ENCODE measurements at regions of chr1 and their contacts with region 1.

Region 1: GRCh38 chr1:197180252-197180878 is 33.9 kb upstream of the ASPM start:
- DNase-seq: peak in 2 of 9 experiments; percentile 40 to 59
- ATAC-seq: peak; percentile 62
- H3K4me3 ChIP-seq: no peak overlapping the region
- H3K4me3 Mint-ChIP-seq: no peak overlapping the region
- H3K27ac ChIP-seq: no peak overlapping the region
- H3K27ac Mint-ChIP-seq: no peak overlapping the region
- H3K4me1 ChIP-seq: no peaks in the 10 kb centered on the region
- H3K4me1 Mint-ChIP-seq: peaks cover 13% of the 10 kb centered on the region
- H3K27me3 ChIP-seq: no peaks in the 10 kb centered on the region
- H3K27me3 Mint-ChIP-seq: no peaks in the 10 kb centered on the region
- CTCF ChIP-seq: peak; percentile 66

Region 2: DNA sequence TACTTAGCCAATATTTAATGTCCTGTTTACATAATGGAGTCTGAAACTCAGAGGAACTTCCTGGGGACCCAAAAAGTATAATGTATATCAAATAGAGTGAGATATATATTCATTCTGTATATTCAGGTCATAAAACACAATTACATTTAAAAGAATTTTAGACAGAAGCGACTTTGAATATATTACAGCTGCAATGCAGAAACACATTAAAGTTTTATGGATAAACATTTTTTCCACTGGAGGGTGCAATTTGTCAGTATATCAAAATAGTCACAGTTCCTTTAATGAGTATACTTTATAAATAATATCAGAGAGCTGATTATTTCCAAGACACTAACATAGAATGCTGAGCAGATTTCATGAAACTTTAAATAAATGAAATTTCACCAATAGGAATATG is 43.8 kb after region 1 on chr1:
- CTCF ChIA-PET with region 1: no interaction called
- POLR2A ChIA-PET with region 1: no interaction called
- intact Hi-C with region 1: loop called in 1 of 2 experiments (anchors 5 kb)
- DNase-seq: no peak
- ATAC-seq: no peak
- H3K4me3 ChIP-seq: no peak overlapping the region
- H3K4me3 Mint-ChIP-seq: no peak overlapping the region
- H3K27ac ChIP-seq: no peak overlapping the region
- H3K27ac Mint-ChIP-seq: no peak overlapping the region
- H3K4me1 ChIP-seq: no peaks in the 10 kb centered on the region
- H3K4me1 Mint-ChIP-seq: no peaks in the 10 kb centered on the region
- H3K27me3 ChIP-seq: no peaks in the 10 kb centered on the region
- H3K27me3 Mint-ChIP-seq: no peaks in the 10 kb centered on the region
- CTCF ChIP-seq: no peak

Region 3: DNA sequence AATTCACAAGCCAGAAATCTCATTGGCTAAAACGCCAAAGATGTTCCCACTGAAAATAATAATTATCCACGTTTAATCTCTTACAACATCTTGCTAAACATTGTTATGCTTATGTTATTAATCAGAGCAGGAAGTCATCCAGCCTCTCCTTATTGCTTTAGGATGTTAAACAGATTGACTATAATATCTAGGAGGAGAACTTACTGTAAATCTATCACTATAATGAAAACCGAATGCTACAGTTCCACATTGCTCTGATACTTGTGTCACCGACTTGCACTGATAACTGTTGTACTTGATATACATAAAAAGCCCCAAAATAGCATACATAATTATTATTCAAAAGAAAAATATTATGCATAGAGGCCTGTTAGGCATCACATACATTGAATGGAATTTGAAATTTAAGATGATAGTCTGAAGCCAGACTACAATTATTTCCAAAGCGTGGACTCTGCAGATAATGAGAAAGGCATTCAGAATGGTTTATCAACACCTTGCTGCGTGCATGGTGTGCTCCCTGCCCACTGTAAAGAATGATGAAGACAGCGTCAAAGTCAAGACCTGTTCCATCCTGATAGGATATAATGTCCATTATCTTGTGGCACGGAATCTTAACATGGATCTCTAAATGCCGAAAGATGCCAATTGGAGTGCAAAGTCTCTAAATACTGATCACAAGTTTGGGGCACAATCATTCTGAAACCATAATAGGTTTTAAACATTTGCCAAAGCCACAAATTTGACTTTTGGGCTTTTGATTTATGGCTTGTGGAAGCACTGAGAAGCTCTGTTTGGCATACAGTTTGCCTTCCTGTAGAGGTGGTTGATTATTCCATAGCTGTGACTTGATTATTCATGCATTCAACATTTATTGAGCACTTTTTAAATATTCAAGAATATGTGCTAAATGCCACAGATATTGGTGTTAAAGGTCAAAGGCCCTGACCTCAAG is 159.0 kb after region 1 on chr1:
- CTCF ChIA-PET with region 1: interaction called, 4 read pairs
- POLR2A ChIA-PET with region 1: no interaction called
- intact Hi-C with region 1: loop called (anchors 1 to 5 kb)
- DNase-seq: no peak
- ATAC-seq: no peak
- H3K4me3 ChIP-seq: no peak overlapping the region
- H3K4me3 Mint-ChIP-seq: no peak overlapping the region
- H3K27ac ChIP-seq: no peak overlapping the region
- H3K27ac Mint-ChIP-seq: no peak overlapping the region
- H3K4me1 ChIP-seq: no peaks in the 10 kb centered on the region
- H3K4me1 Mint-ChIP-seq: peaks cover 3% of the 10 kb centered on the region
- H3K27me3 ChIP-seq: no peaks in the 10 kb centered on the region
- H3K27me3 Mint-ChIP-seq: no peaks in the 10 kb centered on the region
- CTCF ChIP-seq: no peak

Region 4: DNA sequence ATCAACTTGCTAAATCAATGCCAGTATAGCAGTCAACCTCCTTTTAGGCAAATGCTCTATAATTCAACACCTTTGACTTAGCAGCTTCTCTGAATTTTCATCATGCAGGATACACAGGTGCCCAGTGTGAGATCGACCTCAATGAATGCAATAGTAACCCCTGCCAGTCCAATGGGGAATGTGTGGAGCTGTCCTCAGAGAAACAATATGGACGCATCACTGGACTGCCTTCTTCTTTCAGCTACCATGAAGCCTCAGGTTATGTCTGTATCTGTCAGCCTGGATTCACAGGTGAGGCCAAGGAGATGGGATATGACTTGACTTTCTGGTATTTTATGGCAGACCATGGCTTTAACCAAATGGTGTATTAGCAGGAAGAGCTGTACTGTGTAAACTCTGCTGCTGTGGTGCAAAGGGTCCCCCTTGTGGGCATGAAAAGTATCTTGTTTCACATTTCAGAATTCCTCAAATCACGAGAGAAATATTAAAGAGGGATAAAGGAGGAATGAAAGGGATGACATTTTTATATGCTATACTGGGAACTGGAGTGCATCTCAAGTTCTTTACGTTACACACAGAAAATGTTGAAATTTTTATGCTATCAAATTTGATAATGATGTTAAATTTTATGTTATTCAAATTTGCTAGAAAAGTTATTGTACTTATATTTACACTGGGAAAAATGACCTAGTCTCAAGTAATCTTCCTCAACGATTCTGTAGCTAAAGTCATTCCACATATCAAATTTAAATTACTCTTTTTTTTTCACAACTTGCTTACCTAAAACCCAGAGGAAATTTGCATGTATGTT is 176.6 kb after region 1 on chr1:
- CTCF ChIA-PET with region 1: interaction called, 41 read pairs
- POLR2A ChIA-PET with region 1: no interaction called
- intact Hi-C with region 1: loop called (anchors 1 kb)
- DNase-seq: peak in 2 of 9 experiments; percentile 49 to 58
- ATAC-seq: peak; percentile 51
- H3K4me3 ChIP-seq: no peak overlapping the region
- H3K4me3 Mint-ChIP-seq: no peak overlapping the region
- H3K27ac ChIP-seq: no peak overlapping the region
- H3K27ac Mint-ChIP-seq: no peak overlapping the region
- H3K4me1 ChIP-seq: no peaks in the 10 kb centered on the region
- H3K4me1 Mint-ChIP-seq: peaks cover 2% of the 10 kb centered on the region
- H3K27me3 ChIP-seq: no peaks in the 10 kb centered on the region
- H3K27me3 Mint-ChIP-seq: no peaks in the 10 kb centered on the region
- CTCF ChIP-seq: no peak

Region 5: GRCh38 chr1:197496722-197497121 is 316.4 kb after region 1 on chr1:
- CTCF ChIA-PET with region 1: no interaction called
- POLR2A ChIA-PET with region 1: no interaction called
- intact Hi-C with region 1: no loop called
- DNase-seq: no peak
- ATAC-seq: no peak
- H3K4me3 ChIP-seq: no peak overlapping the region
- H3K4me3 Mint-ChIP-seq: no peak overlapping the region
- H3K27ac ChIP-seq: no peak overlapping the region
- H3K27ac Mint-ChIP-seq: no peak overlapping the region
- H3K4me1 ChIP-seq: no peaks in the 10 kb centered on the region
- H3K4me1 Mint-ChIP-seq: no peaks in the 10 kb centered on the region
- H3K27me3 ChIP-seq: no peaks in the 10 kb centered on the region
- H3K27me3 Mint-ChIP-seq: no peaks in the 10 kb centered on the region
- CTCF ChIP-seq: no peak

Measured in CD8-positive, alpha-beta T cell (primary cell).